PC-3 (cell line): ENCODE measurements at regions of chr6 and their contacts with region 1.

Region 1: DNA sequence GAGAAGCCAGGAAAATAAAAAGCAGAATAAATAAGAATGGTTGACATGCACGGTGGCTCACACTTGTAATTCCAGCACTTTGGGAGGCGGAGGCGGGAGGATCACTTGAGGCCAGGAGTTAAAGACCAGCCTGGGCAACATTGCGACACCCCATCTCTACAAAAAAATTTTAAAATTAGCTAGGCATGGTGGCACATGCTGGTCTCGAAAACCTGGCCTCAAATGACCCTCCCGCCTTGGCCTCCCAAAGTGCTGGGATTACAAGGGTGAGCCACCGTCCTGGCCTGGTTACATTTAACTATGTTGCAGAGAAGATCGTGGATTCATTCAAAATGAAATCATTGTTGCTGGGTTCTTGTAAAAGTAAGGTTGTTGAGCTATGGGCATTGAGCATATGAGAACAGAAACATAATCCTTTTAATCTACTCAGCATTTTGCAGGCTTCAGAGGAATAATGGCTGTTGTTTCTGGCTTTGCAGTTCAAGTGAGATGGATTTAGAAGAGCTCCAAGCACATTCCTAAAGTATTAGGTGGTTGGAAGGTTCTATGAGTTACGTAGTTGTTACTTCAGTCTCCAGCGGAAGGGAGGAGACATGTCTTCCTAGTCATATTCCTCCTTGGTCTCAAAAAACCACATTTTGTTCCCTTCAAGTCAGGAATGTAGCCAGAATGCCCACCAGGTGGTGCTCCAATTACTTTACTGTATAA is 45.6 kb upstream of the RAB23 start:
- DNase-seq: peak; percentile 97
- ATAC-seq: peak; percentile 96
- H3K4me3 ChIP-seq: no peak overlapping the region
- H3K27ac ChIP-seq: peak overlapping the region; percentile 70
- H3K4me1 ChIP-seq: peaks cover 40% of the 10 kb centered on the region
- H3K27me3 ChIP-seq: no peaks in the 10 kb centered on the region
- CTCF ChIP-seq: peak; percentile 90

Region 2: GRCh38 chr6:57089687-57090460 is 177.9 kb before region 1 on chr6 and contains the start of gene ZNF451:
- CTCF ChIA-PET with region 1: no interaction called
- POLR2A ChIA-PET with region 1: no interaction called
- intact Hi-C with region 1: no loop called
- DNase-seq: peak; percentile 97
- ATAC-seq: peak; percentile 93
- H3K4me3 ChIP-seq: peak within 1 kb of the TSS; percentile 72
- H3K27ac ChIP-seq: no peak within 1 kb of the TSS
- H3K4me1 ChIP-seq: peaks cover 29% of the 10 kb centered on the region
- H3K27me3 ChIP-seq: no peaks in the 10 kb centered on the region
- CTCF ChIP-seq: no peak
- total RNA-seq, gene ZNF451: 32.5 and 34.5 TPM in 2 replicates

Region 3: DNA sequence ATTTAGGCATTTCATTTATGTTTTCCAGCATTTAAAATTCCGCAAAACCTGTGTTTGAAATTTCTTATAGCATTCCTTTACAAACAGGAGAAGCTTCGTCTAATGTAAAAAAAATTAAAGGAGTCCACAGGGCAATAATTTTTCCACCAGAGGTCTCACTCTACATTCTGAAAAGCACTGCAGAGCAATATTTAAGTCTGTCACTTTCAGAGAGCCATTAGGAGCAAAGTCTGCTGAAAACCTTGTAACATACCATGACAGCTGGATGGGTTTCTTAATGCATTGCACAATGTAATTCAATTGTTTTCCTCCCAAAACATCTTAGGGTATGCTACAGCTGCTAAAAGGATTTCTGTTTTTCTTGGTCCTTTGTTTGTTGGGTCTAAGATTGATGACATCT is 77.6 kb before region 1 on chr6:
- CTCF ChIA-PET with region 1: interaction called, 4 read pairs
- POLR2A ChIA-PET with region 1: no interaction called
- intact Hi-C with region 1: loop called (anchors 2 kb)
- DNase-seq: peak; percentile 45
- ATAC-seq: peak; percentile 70
- H3K4me3 ChIP-seq: no peak overlapping the region
- H3K27ac ChIP-seq: no peak overlapping the region
- H3K4me1 ChIP-seq: no peaks in the 10 kb centered on the region
- H3K27me3 ChIP-seq: no peaks in the 10 kb centered on the region
- CTCF ChIP-seq: peak; percentile 64

Region 4: GRCh38 chr6:57221936-57222742 is 45.6 kb before region 1 on chr6 and contains the start of gene RAB23:
- CTCF ChIA-PET with region 1: no interaction called
- POLR2A ChIA-PET with region 1: interaction called, 5 read pairs
- intact Hi-C with region 1: loop called (anchors 1 kb)
- DNase-seq: peak; percentile 90
- ATAC-seq: peak; percentile 78
- H3K4me3 ChIP-seq: peak within 1 kb of the TSS; percentile 92
- H3K27ac ChIP-seq: peak within 1 kb of the TSS; percentile 29; the same call in 1 of the 2 replicates
- H3K4me1 ChIP-seq: peaks cover 7% of the 10 kb centered on the region
- H3K27me3 ChIP-seq: no peaks in the 10 kb centered on the region
- CTCF ChIP-seq: peak; percentile 0; the same call in 1 of the 2 replicates
- total RNA-seq, gene RAB23: 8.2 and 11.2 TPM in 2 replicates

Region 5: DNA sequence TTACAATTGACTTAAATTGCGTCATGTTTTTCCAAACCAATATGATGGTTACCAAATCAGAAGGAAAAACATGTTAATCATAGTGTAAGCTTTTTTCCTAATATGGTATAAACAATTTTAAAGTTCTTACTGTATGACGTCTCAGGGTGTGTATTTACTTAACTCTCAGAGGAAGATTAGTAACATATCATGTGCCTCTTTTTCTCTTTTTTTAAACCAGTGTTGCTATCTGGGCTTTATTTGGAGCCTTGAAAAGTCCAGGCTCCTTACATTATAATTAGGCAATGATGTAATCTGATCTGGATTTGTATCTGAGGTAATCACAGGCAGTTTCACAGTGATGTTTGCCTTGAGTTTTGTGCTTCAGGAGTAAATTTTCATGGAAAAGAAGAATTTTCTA is 25.2 kb before region 1 on chr6:
- CTCF ChIA-PET with region 1: no interaction called
- POLR2A ChIA-PET with region 1: interaction called, 4 read pairs
- intact Hi-C with region 1: loop called (anchors 1 kb)
- DNase-seq: peak; percentile 66
- ATAC-seq: peak; percentile 90
- H3K4me3 ChIP-seq: no peak overlapping the region
- H3K27ac ChIP-seq: peak overlapping the region; percentile 38
- H3K4me1 ChIP-seq: peaks cover 18% of the 10 kb centered on the region
- H3K27me3 ChIP-seq: no peaks in the 10 kb centered on the region
- CTCF ChIP-seq: no peak